Activated T-helper 1 cell treated with anti-CD3 and anti-CD28 coated beads, Interleukin-12 subunit alpha, Interleukin-12 subunit beta, Interleukin-2, Interleukin-4 antibody, amounts not matched to agents 30 ng/mL and 10 ng/mL and 1 ng/mL, durations not matched to agents 14 hours and 24 hours and 36 hours (primary cell): ENCODE measurements at regions of chr3 and their contacts with region 1.

Region 1: DNA sequence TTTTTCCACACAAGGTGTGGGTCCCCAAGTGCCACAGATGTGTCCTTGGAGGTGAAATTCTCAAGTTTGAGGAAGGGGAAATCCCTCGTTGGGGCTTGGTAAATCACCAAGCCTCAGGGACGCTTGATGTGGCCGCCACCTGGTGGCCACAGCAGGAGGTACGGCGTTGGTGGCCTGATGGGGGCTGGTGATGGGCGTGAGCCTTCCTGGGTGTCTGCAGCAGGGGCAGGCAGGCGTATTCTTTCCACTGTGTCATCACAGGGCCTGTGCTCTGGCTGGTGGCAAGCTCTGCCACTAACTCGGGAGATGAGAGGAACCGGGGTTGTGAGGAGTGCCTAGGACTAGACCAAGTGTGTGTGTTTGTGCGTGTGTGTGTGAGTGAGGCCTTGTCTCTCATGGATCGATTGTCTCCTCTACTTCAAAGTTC is 4.2 kb downstream of the ACOX2 start:
- DNase-seq: peak; percentile 75
- H3K4me3 Mint-ChIP-seq: no peak overlapping the region
- H3K27ac Mint-ChIP-seq: peak overlapping the region; percentile 8
- H3K4me1 Mint-ChIP-seq: peaks cover 13% of the 10 kb centered on the region
- H3K27me3 Mint-ChIP-seq: peaks cover 15% of the 10 kb centered on the region

Region 2: DNA sequence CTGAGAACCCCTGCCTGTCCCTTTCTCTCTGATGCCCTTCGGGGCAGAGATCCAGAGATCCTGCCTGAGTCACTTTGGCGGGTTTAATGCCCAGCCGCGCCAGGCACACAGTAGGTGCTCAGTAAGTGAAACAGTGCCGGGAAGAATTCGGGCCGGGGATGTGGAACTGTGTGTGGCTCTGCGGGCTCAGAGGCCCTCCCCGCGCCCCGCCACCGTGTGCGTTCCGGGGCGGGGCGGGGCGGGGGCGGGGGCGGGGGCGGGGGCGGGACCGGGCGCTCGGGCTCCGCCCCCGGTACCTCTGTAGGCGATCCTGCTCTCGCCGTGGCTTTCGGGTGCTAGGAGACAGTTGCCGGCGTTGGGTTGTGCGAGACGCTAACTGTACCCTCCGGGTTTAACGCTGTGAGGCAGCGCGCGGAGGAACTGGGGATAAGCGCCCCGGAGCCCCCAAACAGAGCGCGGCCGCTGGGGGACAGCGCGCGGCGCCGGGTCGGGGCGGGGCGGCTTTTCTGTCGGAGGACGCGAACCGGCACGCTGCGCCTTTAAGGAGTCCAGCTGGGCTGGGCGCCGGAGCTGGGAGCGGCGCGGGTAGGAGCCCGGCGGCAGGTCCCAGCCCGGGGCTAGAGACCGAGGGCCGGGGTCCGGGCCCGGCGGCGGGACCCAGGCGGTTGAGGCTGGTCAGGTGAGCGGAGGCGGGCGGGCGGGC is 295.4 kb before region 1 on chr3 and contains the start of gene ABHD6:
- intact Hi-C with region 1: loop called (anchors 1 kb)
- DNase-seq: peak; percentile 78
- H3K4me3 Mint-ChIP-seq: peak within 1 kb of the TSS; percentile 90
- H3K27ac Mint-ChIP-seq: peak within 1 kb of the TSS; percentile 67
- H3K4me1 Mint-ChIP-seq: peaks cover 12% of the 10 kb centered on the region
- H3K27me3 Mint-ChIP-seq: peaks cover 32% of the 10 kb centered on the region
- total RNA-seq, gene ABHD6: 9.2 and 10.1 TPM in 2 replicates

Region 3: GRCh38 chr3:58463181-58463941 is 69.4 kb before region 1 on chr3:
- intact Hi-C with region 1: loop called (anchors 1 kb)
- DNase-seq: peak; percentile 71
- H3K4me3 Mint-ChIP-seq: no peak overlapping the region
- H3K27ac Mint-ChIP-seq: no peak overlapping the region
- H3K4me1 Mint-ChIP-seq: peaks cover 13% of the 10 kb centered on the region
- H3K27me3 Mint-ChIP-seq: peaks cover 17% of the 10 kb centered on the region